A549 (cell line): ENCODE measurements at regions of chr20 and their contacts with region 1.

Region 1: DNA sequence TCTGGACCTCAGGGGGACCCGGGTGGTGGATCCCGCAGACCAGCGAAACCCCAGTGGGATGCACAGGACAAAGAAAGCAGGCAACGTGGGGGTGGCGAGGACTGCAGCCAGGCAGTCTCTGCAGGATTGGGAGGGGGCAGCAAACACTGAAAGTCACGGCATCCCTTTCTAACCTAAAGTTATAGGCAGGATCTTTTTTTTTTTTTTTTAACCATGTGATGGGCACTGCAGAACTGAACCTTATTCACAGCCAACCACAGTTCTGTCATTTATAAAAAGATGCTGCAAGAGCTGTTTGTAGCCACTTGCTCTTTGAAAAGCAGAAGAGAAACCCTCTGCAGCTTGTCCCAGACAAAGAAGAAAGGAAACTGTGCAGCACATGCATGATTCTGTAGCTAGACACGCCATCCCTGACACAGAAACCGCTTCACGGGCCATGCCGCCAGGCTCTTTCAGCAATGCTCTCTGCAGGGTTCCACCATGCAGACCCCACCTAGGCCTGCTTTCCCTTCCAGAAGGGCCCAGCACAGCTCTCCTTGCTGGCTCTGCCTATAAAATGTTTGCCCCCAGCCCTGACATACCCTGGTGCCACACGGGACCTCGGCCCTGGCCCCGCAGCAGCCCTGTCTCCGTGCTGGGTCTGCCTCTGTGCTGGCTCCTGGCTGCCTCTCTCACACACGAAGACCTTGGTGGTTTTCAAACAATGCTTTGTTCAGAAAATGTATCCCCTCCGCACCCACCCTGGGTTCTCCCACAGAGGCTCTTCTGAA is 70.8 kb downstream of the PYGB start:
- DNase-seq: no peak
- ATAC-seq: no peak
- H3K4me3 ChIP-seq: no peak overlapping the region
- H3K27ac ChIP-seq: peak overlapping the region in 1 of 2 experiments; percentile 9; a peak in 1 of 6 replicates
- H3K4me1 ChIP-seq: peaks cover 27% of the 10 kb centered on the region
- CTCF ChIP-seq: no peak
- EP300 ChIP-seq: no peak
- POLR2A ChIP-seq: no peak
- RAD21 ChIP-seq: no peak

Region 2: GRCh38 chr20:25299806-25300205 is 18.9 kb before region 1 on chr20:
- CTCF ChIA-PET with region 1: interaction called, 36 read pairs
- POLR2A ChIA-PET with region 1: no interaction called
- DNase-seq: no peak
- ATAC-seq: peak in 1 of 2 experiments; percentile 9; a peak in 2 of 6 replicates
- H3K4me3 ChIP-seq: no peak overlapping the region
- H3K27ac ChIP-seq: peak overlapping the region; percentile 53 to 72
- H3K4me1 ChIP-seq: peaks cover 61% of the 10 kb centered on the region
- CTCF ChIP-seq: no peak
- EP300 ChIP-seq: no peak
- POLR2A ChIP-seq: no peak
- RAD21 ChIP-seq: no peak

Region 3: DNA sequence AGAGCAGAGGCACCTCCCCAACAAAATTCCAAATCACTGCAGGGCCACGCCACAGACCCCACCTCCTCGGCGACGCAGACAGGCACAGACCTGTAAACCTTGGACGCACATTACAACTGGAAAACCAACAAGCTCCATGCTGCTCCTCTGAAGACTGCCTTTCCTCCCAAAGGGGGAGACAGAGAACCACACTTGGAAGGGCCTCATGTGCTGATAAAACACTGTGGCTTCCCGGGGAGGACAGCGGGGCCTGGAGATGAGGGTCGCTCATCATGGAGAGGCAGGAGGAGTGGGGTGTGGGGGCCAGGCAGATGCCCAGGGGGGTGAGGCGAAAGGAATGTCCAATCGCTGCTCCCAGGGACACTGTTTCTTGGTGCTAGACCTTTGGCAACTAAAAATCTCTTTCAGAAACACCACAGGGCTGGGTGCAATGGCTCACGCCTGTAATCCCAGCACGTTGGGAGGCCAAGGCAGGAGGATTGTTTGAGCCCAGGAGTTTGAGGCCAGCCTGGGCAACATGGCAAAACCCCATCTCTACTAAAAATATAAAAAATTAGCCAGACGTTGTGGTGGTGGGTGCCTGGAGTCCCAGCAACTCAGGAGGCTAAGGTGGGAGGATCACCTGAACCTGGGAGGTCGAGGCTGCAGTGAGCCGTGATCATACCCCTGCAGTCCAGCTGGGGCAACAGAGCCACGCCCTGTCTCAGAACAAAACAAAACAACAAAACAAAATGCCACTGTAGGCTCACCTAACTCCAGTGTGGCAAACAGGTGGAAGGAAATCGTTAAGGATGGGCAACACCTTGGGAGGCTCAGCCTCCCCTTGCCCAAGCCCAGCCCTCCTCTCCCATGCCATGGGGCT is 18.1 kb after region 1 on chr20:
- CTCF ChIA-PET with region 1: interaction called, 35 read pairs
- POLR2A ChIA-PET with region 1: no interaction called
- DNase-seq: peak; percentile 33 to 71
- ATAC-seq: peak; percentile 94
- H3K4me3 ChIP-seq: no peak overlapping the region
- H3K27ac ChIP-seq: peak overlapping the region in 1 of 2 experiments; percentile 50; a peak in 2 of 6 replicates
- H3K4me1 ChIP-seq: peaks cover 24% of the 10 kb centered on the region; the same call in 2 of the 3 replicates
- CTCF ChIP-seq: peak; percentile 30
- EP300 ChIP-seq: no peak
- POLR2A ChIP-seq: no peak
- RAD21 ChIP-seq: peak; percentile 54 to 73

Region 4: GRCh38 chr20:25364180-25364788 is 45.6 kb after region 1 on chr20:
- CTCF ChIA-PET with region 1: interaction called, 10 read pairs
- POLR2A ChIA-PET with region 1: interaction called, 3 read pairs
- DNase-seq: no peak
- ATAC-seq: no peak
- H3K4me3 ChIP-seq: no peak overlapping the region
- H3K27ac ChIP-seq: no peak overlapping the region
- H3K4me1 ChIP-seq: peaks cover 15% of the 10 kb centered on the region
- CTCF ChIP-seq: no peak
- EP300 ChIP-seq: no peak
- POLR2A ChIP-seq: no peak
- RAD21 ChIP-seq: no peak